ENCODE measurements at regions of chr3 and their contacts with region 1.

Region 1: GRCh38 chr3:35141406-35141805 is 497.9 kb upstream of the ARPP21 start:
- DNase-seq: no peak
- ATAC-seq: no peak
- H3K4me3 ChIP-seq: no peak overlapping the region
- H3K27ac ChIP-seq: no peak overlapping the region
- H3K4me1 ChIP-seq: no peaks in the 10 kb centered on the region
- H3K27me3 ChIP-seq: no peaks in the 10 kb centered on the region
- CTCF ChIP-seq: no peak
- POLR2A ChIP-seq: no peak
- RAD21 ChIP-seq: no peak

Region 2: GRCh38 chr3:34828847-34829246 is 312.6 kb before region 1 on chr3:
- CTCF ChIA-PET with region 1: no interaction called
- POLR2A ChIA-PET with region 1: no interaction called
- dilution Hi-C with region 1: no loop called
- in situ Hi-C with region 1: no loop called
- intact Hi-C with region 1: loop called (anchors 10 kb)
- DNase-seq: no peak
- ATAC-seq: no peak
- H3K4me3 ChIP-seq: no peak overlapping the region
- H3K27ac ChIP-seq: no peak overlapping the region
- H3K4me1 ChIP-seq: no peaks in the 10 kb centered on the region
- H3K27me3 ChIP-seq: no peaks in the 10 kb centered on the region
- CTCF ChIP-seq: no peak
- POLR2A ChIP-seq: no peak
- RAD21 ChIP-seq: no peak

Region 3: DNA sequence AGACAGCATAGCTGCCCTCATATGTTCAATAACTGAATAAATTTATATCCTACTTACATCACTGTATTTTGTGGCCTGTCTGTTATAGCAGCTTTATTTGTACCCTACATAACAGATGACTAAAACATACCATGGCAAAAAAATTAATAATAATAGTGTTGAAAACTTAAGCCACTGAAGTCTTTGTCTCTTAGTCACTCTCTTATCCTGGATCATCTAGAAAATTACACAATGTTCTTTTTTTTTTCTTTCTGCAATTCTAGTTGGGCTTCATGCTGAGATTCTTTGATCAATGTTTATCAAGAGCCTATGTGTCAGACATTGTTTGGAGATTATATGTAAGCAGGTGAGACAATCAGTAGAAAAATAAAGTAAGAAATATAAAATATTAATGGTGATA is 21.4 kb before region 1 on chr3:
- CTCF ChIA-PET with region 1: no interaction called
- POLR2A ChIA-PET with region 1: no interaction called
- dilution Hi-C with region 1: no loop called
- in situ Hi-C with region 1: no loop called
- intact Hi-C with region 1: no loop called
- DNase-seq: no peak
- ATAC-seq: no peak
- H3K4me3 ChIP-seq: no peak overlapping the region
- H3K27ac ChIP-seq: no peak overlapping the region
- H3K4me1 ChIP-seq: no peaks in the 10 kb centered on the region
- H3K27me3 ChIP-seq: no peaks in the 10 kb centered on the region
- CTCF ChIP-seq: no peak
- POLR2A ChIP-seq: no peak
- RAD21 ChIP-seq: no peak

Region 4: DNA sequence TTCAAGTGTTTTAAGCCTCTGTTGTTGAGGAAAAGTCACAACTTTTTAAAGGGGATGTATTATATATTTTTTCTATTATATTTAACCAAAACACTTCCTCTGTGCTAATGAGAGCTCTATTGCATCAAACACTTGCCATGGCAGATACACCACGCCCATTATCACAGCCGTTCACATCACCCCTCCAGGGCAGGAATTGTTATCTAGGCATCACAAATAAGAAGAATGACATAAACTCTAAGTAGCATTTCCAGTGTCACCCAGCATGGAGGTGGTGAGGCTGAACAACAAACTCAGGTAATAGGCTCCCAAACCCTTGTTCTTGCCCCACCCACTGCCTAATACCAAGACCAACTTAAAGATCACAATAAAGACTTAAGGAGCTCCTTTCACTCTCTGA is 103.6 kb after region 1 on chr3:
- CTCF ChIA-PET with region 1: no interaction called
- POLR2A ChIA-PET with region 1: no interaction called
- dilution Hi-C with region 1: no loop called
- in situ Hi-C with region 1: no loop called
- intact Hi-C with region 1: no loop called
- DNase-seq: no peak
- ATAC-seq: no peak
- H3K4me3 ChIP-seq: no peak overlapping the region
- H3K27ac ChIP-seq: no peak overlapping the region
- H3K4me1 ChIP-seq: no peaks in the 10 kb centered on the region
- H3K27me3 ChIP-seq: no peaks in the 10 kb centered on the region
- CTCF ChIP-seq: no peak
- POLR2A ChIP-seq: no peak
- RAD21 ChIP-seq: no peak

Region 5: DNA sequence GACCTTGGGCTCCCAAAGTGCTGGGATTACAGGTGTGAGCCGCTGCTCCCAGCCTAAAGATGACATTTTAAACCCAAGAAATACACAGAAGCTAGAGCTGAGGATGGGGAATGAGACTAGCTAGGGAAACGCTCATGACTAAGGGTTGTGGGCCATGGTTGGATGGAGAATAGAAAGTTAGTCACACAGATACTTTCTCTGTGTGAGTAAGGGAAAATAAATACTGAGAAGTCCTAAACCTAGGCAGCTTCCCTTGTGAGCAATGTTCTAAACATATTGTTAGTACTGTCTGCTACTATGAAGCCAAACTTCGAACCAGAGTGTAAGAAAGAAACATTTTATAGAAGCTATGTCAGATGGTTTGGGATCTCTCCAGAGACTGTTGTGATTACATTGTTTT is 934.1 kb after region 1 on chr3:
- CTCF ChIA-PET with region 1: no interaction called
- POLR2A ChIA-PET with region 1: no interaction called
- dilution Hi-C with region 1: no loop called
- in situ Hi-C with region 1: no loop called
- intact Hi-C with region 1: no loop called
- DNase-seq: no peak
- ATAC-seq: no peak
- H3K4me3 ChIP-seq: no peak overlapping the region
- H3K27ac ChIP-seq: no peak overlapping the region
- H3K4me1 ChIP-seq: no peaks in the 10 kb centered on the region
- H3K27me3 ChIP-seq: no peaks in the 10 kb centered on the region
- CTCF ChIP-seq: no peak
- POLR2A ChIP-seq: no peak
- RAD21 ChIP-seq: no peak